MCF 10A (cell line): ENCODE measurements at regions of chr21 and their contacts with region 1.

Region 1: GRCh38 chr21:25039461-25040380 is 567.6 kb downstream of the MRPL39 start:
- DNase-seq: peak; percentile 64
- H3K4me3 Mint-ChIP-seq: peak overlapping the region; percentile 71
- H3K27ac Mint-ChIP-seq: peak overlapping the region; percentile 52
- H3K4me1 Mint-ChIP-seq: peaks cover 8% of the 10 kb centered on the region
- H3K27me3 Mint-ChIP-seq: no peaks in the 10 kb centered on the region
- CTCF ChIP-seq: peak; percentile 58

Region 2: DNA sequence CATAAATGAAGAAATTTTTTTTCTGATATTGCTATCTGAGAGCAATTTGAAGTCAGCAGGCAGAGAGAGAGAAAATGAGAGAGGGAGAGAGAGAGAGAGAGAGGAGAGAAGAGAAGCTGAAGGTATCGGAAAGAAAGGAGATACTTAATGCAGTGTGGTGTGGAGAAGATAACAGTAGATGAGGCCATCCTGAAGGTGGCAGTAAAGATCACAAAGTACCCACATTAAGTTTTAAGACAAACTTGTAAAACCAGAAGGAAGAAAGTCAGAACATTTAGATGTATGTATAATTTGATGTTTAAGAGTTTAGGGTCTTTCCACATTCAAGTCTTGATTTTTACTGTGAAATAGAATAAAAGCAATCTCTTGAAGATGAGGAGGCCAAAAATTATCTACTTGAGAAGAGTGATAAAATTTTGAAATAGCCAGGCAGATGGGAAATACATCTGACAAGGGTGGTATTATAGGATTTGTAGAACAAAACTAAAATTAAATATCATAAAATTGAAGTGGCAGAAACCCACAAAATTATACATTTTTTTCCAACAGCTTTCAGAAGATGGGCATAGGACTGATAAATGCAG is 1185.8 kb before region 1 on chr21:
- CTCF ChIA-PET with region 1: no interaction called
- POLR2A ChIA-PET with region 1: no interaction called
- intact Hi-C with region 1: loop called (anchors 10 kb)
- DNase-seq: peak; percentile 52
- H3K4me3 Mint-ChIP-seq: no peak overlapping the region
- H3K27ac Mint-ChIP-seq: no peak overlapping the region
- H3K4me1 Mint-ChIP-seq: peaks cover 5% of the 10 kb centered on the region
- H3K27me3 Mint-ChIP-seq: no peaks in the 10 kb centered on the region
- CTCF ChIP-seq: peak; percentile 44

Region 3: DNA sequence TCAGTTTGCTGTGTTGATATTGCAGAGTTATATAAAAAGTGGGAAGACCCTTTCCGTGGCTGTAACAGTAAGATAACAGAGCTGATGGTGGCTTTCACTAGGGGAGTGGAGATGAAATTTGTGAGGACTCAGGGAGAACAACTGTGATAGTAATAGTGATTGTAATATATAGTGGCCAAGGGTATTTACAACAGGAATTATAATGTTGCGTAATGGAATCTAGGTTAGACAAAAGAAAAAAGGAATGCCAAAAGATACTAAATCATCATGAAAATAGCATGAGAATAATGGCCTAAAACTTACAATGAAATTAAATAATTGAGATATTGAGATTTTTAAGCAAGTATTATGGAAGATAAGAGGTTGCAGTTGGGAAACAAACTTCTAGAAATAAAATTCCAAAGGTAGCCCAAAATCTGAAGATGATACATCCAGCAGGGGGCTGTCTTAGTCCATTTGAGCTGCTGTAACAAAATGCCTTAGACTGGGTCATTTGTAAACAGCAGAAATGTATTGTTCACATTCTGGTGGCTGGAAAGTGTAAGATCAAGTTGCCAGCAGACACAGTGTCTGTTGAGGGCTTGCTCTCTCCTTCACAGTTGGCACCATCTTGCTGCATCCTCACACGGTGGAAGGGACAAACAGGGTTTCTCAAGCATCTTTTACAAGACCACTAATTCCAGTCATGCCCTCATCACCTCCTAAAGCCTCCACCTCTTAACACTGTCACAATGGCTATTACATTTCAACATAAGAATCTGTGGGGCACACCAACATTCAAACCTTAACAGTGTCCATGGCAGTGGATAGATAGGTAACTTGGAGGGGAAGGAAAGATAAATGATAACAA is 143.6 kb before region 1 on chr21:
- CTCF ChIA-PET with region 1: interaction called, 64 read pairs
- POLR2A ChIA-PET with region 1: interaction called, 3 read pairs
- intact Hi-C with region 1: loop called (anchors 1 kb)
- DNase-seq: peak; percentile 69
- H3K4me3 Mint-ChIP-seq: no peak overlapping the region
- H3K27ac Mint-ChIP-seq: no peak overlapping the region
- H3K4me1 Mint-ChIP-seq: peaks cover 7% of the 10 kb centered on the region
- H3K27me3 Mint-ChIP-seq: no peaks in the 10 kb centered on the region
- CTCF ChIP-seq: peak; percentile 45

Region 4: GRCh38 chr21:25062061-25062460 is 22.3 kb after region 1 on chr21:
- CTCF ChIA-PET with region 1: no interaction called
- POLR2A ChIA-PET with region 1: no interaction called
- intact Hi-C with region 1: no loop called
- DNase-seq: no peak
- H3K4me3 Mint-ChIP-seq: no peak overlapping the region
- H3K27ac Mint-ChIP-seq: no peak overlapping the region
- H3K4me1 Mint-ChIP-seq: no peaks in the 10 kb centered on the region
- H3K27me3 Mint-ChIP-seq: no peaks in the 10 kb centered on the region
- CTCF ChIP-seq: no peak

Region 5: GRCh38 chr21:25170681-25171080 is 131.0 kb after region 1 on chr21:
- CTCF ChIA-PET with region 1: no interaction called
- POLR2A ChIA-PET with region 1: no interaction called
- intact Hi-C with region 1: no loop called
- DNase-seq: no peak
- H3K4me3 Mint-ChIP-seq: no peak overlapping the region
- H3K27ac Mint-ChIP-seq: no peak overlapping the region
- H3K4me1 Mint-ChIP-seq: peaks cover 26% of the 10 kb centered on the region
- H3K27me3 Mint-ChIP-seq: no peaks in the 10 kb centered on the region
- CTCF ChIP-seq: no peak

Region 6: DNA sequence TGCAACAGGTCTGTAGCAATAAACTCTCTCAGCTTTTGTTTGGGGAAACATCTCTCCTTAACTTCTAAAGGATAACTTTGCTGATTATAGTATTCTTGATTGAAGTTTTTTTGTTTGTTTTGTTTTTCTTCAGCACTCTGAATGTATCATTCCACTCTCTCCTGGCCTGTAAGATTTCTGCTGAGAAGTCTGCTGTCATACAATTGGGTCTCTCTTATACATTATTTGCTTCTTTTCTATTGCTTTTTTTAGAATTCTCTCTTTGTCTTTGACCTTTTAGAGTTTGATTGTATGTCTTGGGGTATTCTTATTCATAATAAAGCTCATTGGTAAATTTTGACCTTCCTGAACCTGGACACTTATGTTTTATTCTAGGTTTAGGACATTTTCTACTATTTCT is 181.2 kb after region 1 on chr21:
- CTCF ChIA-PET with region 1: no interaction called
- POLR2A ChIA-PET with region 1: no interaction called
- intact Hi-C with region 1: no loop called
- DNase-seq: no peak
- H3K4me3 Mint-ChIP-seq: no peak overlapping the region
- H3K27ac Mint-ChIP-seq: no peak overlapping the region
- H3K4me1 Mint-ChIP-seq: no peaks in the 10 kb centered on the region
- H3K27me3 Mint-ChIP-seq: no peaks in the 10 kb centered on the region
- CTCF ChIP-seq: no peak

Region 7: GRCh38 chr21:25313829-25314228 is 274.1 kb after region 1 on chr21:
- CTCF ChIA-PET with region 1: interaction called, 4 read pairs
- POLR2A ChIA-PET with region 1: no interaction called
- intact Hi-C with region 1: loop called (anchors 5 kb)
- DNase-seq: peak; percentile 33
- H3K4me3 Mint-ChIP-seq: no peak overlapping the region
- H3K27ac Mint-ChIP-seq: no peak overlapping the region
- H3K4me1 Mint-ChIP-seq: no peaks in the 10 kb centered on the region
- H3K27me3 Mint-ChIP-seq: no peaks in the 10 kb centered on the region
- CTCF ChIP-seq: peak; percentile 64

Region 8: GRCh38 chr21:25385911-25386474 is 346.3 kb after region 1 on chr21:
- CTCF ChIA-PET with region 1: interaction called, 5 read pairs
- POLR2A ChIA-PET with region 1: no interaction called
- intact Hi-C with region 1: loop called (anchors 2 kb)
- DNase-seq: peak; percentile 75
- H3K4me3 Mint-ChIP-seq: no peak overlapping the region
- H3K27ac Mint-ChIP-seq: no peak overlapping the region
- H3K4me1 Mint-ChIP-seq: peaks cover 12% of the 10 kb centered on the region
- H3K27me3 Mint-ChIP-seq: no peaks in the 10 kb centered on the region
- CTCF ChIP-seq: peak; percentile 73

Region 9: GRCh38 chr21:25453524-25453923 is 413.8 kb after region 1 on chr21:
- CTCF ChIA-PET with region 1: no interaction called
- POLR2A ChIA-PET with region 1: no interaction called
- intact Hi-C with region 1: no loop called
- DNase-seq: no peak
- H3K4me3 Mint-ChIP-seq: no peak overlapping the region
- H3K27ac Mint-ChIP-seq: no peak overlapping the region
- H3K4me1 Mint-ChIP-seq: peaks cover 10% of the 10 kb centered on the region
- H3K27me3 Mint-ChIP-seq: no peaks in the 10 kb centered on the region
- CTCF ChIP-seq: no peak